Left ventricle myocardium superior (tissue), 1 donor: ENCODE measurements at regions of chr2 and their contacts with region 1.

Region 1: DNA sequence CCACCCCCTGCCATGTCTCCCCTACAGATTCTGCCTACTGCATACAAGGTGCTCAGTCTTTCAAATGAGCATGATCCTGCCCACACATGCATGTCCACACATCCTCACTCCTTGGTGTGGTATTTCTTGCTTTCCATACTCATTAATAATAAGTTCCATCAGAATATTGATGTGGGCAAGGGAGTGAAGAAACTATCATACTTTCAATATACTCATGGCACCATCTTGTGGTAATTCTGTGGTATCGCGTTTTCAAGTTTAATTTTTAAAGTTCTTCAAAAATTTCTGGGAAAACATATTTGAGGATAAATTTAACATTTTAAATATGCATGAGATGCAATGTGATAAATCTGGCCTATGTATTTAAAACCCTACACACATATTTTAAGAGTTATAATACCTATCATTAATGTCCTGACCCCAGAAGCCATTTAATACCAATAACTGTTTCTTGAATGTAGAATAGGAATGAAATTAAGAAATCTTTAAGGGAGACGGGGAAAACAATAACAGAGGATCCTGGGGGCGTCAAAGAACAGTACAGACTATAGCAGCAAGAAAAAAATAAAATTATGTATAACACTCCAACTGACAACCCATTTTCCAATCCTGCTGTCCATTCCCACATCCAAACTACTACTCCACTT is 110.1 kb downstream of the ZNF385B start:
- DNase-seq: no peak
- ATAC-seq: no peak

Region 2: DNA sequence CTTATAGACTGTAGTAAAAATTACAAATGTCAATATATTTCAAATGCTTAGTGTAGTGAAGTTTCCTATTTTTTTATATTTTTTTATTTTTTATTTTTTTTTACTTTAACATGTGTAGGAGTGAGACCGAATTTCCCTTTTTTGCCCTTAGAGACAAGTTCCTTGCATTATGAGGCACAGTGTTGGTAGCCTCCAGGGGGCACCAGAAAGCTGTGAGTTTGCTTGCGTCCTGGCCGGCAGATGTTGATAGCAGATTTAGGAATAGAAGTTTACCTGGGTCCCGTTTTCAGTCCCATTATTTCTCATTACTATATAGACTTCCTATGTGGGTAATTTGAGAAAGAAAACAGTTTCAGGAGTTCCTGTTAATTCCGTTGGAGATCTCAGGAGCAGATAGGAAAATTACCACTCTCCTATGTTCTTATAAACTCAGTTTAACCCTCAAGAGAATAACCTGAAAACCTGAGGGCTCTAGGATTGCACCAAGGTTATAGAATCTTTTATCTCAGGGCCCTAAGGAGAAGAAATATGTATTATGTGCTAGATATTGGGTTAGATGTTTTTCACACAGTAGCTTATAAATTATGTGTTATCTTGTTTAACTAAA is 329.1 kb before region 1 on chr2:
- intact Hi-C with region 1: loop called (anchors 5 kb)
- DNase-seq: peak; percentile 75
- ATAC-seq: peak; percentile 60

Region 3: DNA sequence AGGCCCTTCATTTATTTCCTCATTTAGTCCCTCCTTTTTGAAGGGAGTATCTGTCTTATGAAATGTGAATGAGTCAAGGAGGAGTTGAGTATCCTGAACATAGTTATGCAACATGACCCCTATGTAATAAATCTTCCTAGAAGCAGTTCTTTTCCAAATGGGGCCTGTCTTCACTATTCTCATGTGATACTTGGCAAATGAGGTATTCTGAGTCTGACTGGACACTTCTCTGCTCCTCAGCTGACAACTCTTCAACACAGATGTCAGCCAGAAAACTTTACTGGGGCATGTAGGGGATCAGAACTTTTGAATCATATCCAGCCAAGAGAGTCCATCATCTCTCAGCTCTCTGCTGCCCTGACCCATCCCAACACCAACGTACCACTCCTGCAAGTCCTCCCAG is 181.5 kb before region 1 on chr2:
- intact Hi-C with region 1: loop called (anchors 10 kb)
- DNase-seq: no peak
- ATAC-seq: peak; percentile 48